ENCODE measurements at regions of chr7 and their contacts with region 1.

Region 1: DNA sequence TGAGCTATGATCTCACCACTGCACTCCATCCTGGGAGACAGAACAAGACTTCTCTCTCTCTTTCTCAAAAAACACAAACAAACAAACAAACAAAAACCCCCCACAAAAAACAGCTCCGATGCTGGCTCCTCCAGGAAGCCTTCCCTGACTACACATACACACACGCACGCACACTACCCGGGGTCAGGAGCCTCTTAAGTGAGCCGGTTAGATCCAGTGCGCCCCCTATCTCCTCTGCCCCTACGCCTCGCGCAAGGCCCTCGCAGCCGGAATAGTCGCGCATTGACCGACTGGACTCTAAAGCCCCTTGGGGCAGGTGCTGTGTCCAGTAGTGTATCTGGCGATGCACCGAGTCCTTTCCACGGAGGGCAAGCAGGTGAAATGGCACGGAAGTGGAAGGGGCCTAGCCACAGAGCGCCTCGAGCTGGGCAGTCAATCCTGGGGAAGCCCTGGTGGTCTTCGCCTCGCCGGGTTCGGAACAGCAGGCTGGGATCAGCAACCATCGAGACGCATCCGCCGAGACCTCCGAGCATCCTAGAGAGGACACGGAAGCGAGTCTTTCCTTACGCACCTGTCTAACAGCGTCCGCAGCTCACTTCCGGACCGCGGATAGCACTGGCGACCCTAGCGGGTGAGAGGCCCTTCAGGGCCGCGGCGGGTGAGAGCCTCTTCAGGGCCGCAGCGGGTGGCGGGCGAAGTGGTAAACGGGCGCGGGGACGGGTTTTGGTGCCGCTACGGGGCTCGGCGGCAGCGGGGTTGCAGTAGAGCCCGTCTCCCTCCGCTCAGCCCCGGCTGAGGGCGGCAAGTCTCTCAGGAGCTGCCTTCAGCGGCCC is at the start of gene ZSCAN25:
- DNase-seq: peak; percentile 79 to 94
- ATAC-seq: peak; percentile 94 to 96 (median 95)
- H3K4me3 ChIP-seq: peak within 1 kb of the TSS; percentile 80
- H3K4me3 Mint-ChIP-seq: peak within 1 kb of the TSS; percentile 94
- H3K27ac ChIP-seq: peak within 1 kb of the TSS; percentile 76
- H3K27ac Mint-ChIP-seq: peak within 1 kb of the TSS; percentile 90 to 96
- H3K4me1 ChIP-seq: peaks cover 17% of the 10 kb centered on the region
- H3K4me1 Mint-ChIP-seq: peaks cover 30 to 49% of the 10 kb centered on the region in 2 donors
- H3K27me3 ChIP-seq: no peaks in the 10 kb centered on the region
- H3K27me3 Mint-ChIP-seq: no peaks in the 10 kb centered on the region
- CTCF ChIP-seq: no peak
- total RNA-seq, gene ZSCAN25: 24.4 to 37.4 (median 27.8) TPM

Region 2: GRCh38 chr7:99558306-99559174 is 58.0 kb before region 1 on chr7 and contains the start of gene ZNF655:
- intact Hi-C with region 1: loop called (anchors 2 kb)
- DNase-seq: peak; percentile 94 to 95
- ATAC-seq: peak; percentile 80 to 94 (median 86)
- H3K4me3 ChIP-seq: peak within 1 kb of the TSS; percentile 98
- H3K4me3 Mint-ChIP-seq: peak within 1 kb of the TSS; percentile 94
- H3K27ac ChIP-seq: peak within 1 kb of the TSS; percentile 95
- H3K27ac Mint-ChIP-seq: peak within 1 kb of the TSS; percentile 98 to 99
- H3K4me1 ChIP-seq: peaks cover 32% of the 10 kb centered on the region
- H3K4me1 Mint-ChIP-seq: peaks cover 48 to 50% of the 10 kb centered on the region in 2 donors
- H3K27me3 ChIP-seq: no peaks in the 10 kb centered on the region
- H3K27me3 Mint-ChIP-seq: no peaks in the 10 kb centered on the region
- CTCF ChIP-seq: no peak
- total RNA-seq, gene ZNF655: 171 to 214 (median 196) TPM

Measured in natural killer cell (primary cell).